Activated B cell treated with CpG ODN at 0.5 μM for 24 hours (primary cell): ENCODE measurements at regions of chrX and their contacts with region 1.

Region 1: GRCh38 chrX:32525234-32525633 is 686.1 kb downstream of the DMD start:
- DNase-seq: no peak
- ATAC-seq: no peak
- H3K4me3 Mint-ChIP-seq: no peak overlapping the region
- H3K27ac Mint-ChIP-seq: no peak overlapping the region
- H3K4me1 Mint-ChIP-seq: peaks cover 10% of the 10 kb centered on the region
- H3K27me3 Mint-ChIP-seq: no peaks in the 10 kb centered on the region
- CTCF ChIP-seq: no peak

Region 2: GRCh38 chrX:32408389-32408788 is 116.8 kb before region 1 on chrX:
- CTCF ChIA-PET with region 1: no interaction called
- POLR2A ChIA-PET with region 1: no interaction called
- intact Hi-C with region 1: no loop called
- DNase-seq: no peak
- ATAC-seq: no peak
- H3K4me3 Mint-ChIP-seq: no peak overlapping the region
- H3K27ac Mint-ChIP-seq: no peak overlapping the region
- H3K4me1 Mint-ChIP-seq: no peaks in the 10 kb centered on the region
- H3K27me3 Mint-ChIP-seq: no peaks in the 10 kb centered on the region
- CTCF ChIP-seq: no peak

Region 3: GRCh38 chrX:32495855-32496254 is 29.4 kb before region 1 on chrX:
- CTCF ChIA-PET with region 1: no interaction called
- POLR2A ChIA-PET with region 1: no interaction called
- intact Hi-C with region 1: no loop called
- DNase-seq: no peak
- ATAC-seq: no peak
- H3K4me3 Mint-ChIP-seq: no peak overlapping the region
- H3K27ac Mint-ChIP-seq: no peak overlapping the region
- H3K4me1 Mint-ChIP-seq: no peaks in the 10 kb centered on the region
- H3K27me3 Mint-ChIP-seq: no peaks in the 10 kb centered on the region
- CTCF ChIP-seq: no peak

Region 4: DNA sequence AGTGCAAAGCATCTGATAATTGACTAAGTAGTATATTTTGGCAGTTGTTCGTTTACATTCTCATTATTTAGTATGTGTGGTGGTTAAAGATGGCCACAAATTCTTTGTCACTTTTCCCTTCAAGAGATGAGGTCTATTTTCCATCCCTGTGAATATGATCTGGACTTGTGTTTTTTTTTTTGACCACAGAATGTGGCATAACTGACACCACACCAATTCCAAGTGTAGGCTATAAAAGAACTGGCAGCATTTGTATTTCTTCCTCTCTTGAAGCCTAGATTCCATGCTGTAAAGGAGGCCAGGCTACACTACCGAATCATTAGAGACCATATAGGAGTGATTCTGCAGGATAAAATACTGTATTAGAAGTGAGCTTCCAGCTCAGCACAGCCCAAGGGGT is 89.5 kb after region 1 on chrX:
- CTCF ChIA-PET with region 1: no interaction called
- POLR2A ChIA-PET with region 1: no interaction called
- intact Hi-C with region 1: no loop called
- DNase-seq: no peak
- ATAC-seq: no peak
- H3K4me3 Mint-ChIP-seq: no peak overlapping the region
- H3K27ac Mint-ChIP-seq: no peak overlapping the region
- H3K4me1 Mint-ChIP-seq: no peaks in the 10 kb centered on the region
- H3K27me3 Mint-ChIP-seq: no peaks in the 10 kb centered on the region
- CTCF ChIP-seq: no peak

Region 5: GRCh38 chrX:32673193-32673592 is 148.0 kb after region 1 on chrX:
- CTCF ChIA-PET with region 1: no interaction called
- POLR2A ChIA-PET with region 1: no interaction called
- intact Hi-C with region 1: loop called (anchors 5 kb)
- DNase-seq: no peak
- ATAC-seq: no peak
- H3K4me3 Mint-ChIP-seq: no peak overlapping the region
- H3K27ac Mint-ChIP-seq: no peak overlapping the region
- H3K4me1 Mint-ChIP-seq: no peaks in the 10 kb centered on the region
- H3K27me3 Mint-ChIP-seq: no peaks in the 10 kb centered on the region
- CTCF ChIP-seq: no peak